Ovary (tissue), 10 donors: ENCODE measurements at regions of chr15 and their contacts with region 1.

Region 1: DNA sequence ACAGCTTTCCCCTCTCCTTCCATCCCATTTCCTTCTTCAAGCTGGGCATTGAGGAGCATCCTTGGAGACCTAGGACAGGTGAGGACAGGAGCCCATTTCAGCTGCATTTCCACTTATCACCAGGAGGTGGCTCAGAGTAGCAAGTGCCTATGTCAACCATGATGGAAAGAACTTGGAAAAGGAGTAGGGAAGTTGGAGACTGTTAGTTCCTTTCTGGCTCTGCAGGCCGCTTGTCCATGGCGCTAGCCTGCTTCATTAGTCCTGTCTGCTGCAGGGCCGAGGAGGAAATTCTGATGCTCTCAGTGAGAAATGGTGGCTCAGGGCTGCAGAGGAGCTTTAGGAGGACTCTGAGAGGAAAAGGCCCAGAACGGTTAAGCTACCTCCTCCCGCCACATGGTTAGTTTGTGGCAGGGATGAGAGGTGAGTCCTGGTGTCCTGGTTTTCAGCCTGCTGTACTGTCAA is 7.0 kb upstream of the CD276 start:
- DNase-seq: peak; percentile 55 to 80 (median 65)
- H3K4me3 ChIP-seq: no peak overlapping the region
- H3K27ac ChIP-seq: no peak overlapping the region
- H3K4me1 ChIP-seq: no peaks in the 10 kb centered on the region
- H3K27me3 ChIP-seq: no peaks in the 10 kb centered on the region
- CTCF ChIP-seq: peak; percentile 67 to 88 (median 83)
- EP300 ChIP-seq: no peak
- POLR2A ChIP-seq: no peak

Region 2: DNA sequence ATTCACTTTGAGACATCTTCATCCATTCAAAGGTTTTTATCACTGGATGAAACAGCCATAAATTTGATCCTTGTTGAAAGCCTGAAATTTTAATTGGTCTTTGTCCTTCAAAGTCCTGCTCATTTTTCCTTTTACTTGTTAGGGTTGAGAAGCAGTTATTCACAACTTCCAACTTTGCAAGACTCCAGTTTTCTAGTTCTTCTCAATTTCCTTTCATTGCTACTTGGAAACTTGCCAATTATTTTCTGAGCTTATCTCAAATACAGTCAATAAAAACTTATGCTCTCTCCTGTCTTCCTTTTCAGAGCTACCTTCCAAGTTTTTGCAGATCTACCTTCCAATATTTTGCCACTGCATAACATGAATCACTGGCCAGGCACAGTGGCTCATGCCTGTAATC is 16.7 kb before region 1 on chr15:
- intact Hi-C with region 1: loop called in 1 of 4 experiments (anchors 2 kb)
- DNase-seq: no peak
- H3K4me3 ChIP-seq: no peak overlapping the region
- H3K27ac ChIP-seq: no peak overlapping the region
- H3K4me1 ChIP-seq: no peaks in the 10 kb centered on the region
- H3K27me3 ChIP-seq: no peaks in the 10 kb centered on the region
- CTCF ChIP-seq: no peak
- EP300 ChIP-seq: no peak
- POLR2A ChIP-seq: no peak

Region 3: DNA sequence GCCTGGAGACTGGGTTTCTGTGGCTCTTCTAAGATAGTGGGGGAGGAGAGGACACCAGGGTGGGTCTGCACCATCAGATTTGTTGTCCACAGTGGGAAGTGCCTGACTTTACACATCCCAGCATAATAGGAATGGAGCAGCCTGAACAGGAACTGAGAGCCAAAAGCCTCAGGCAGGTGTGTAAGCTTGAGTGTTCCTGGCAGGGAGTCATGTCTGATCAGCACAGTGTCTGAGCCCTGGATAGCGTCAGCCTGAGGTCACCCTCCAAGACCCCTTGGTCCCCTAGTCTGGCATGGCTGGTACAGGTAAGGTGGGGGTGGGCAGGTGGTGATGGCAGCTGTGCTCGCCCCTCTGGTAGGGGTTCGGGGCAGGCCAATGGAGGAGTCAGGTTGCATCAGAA is 55.8 kb after region 1 on chr15:
- intact Hi-C with region 1: no loop called
- DNase-seq: no peak
- H3K4me3 ChIP-seq: no peak overlapping the region
- H3K27ac ChIP-seq: no peak overlapping the region
- H3K4me1 ChIP-seq: no peaks in the 10 kb centered on the region
- H3K27me3 ChIP-seq: no peaks in the 10 kb centered on the region
- CTCF ChIP-seq: no peak
- EP300 ChIP-seq: no peak
- POLR2A ChIP-seq: no peak